ENCODE measurements at regions of chr18 and their contacts with region 1.

Region 1: DNA sequence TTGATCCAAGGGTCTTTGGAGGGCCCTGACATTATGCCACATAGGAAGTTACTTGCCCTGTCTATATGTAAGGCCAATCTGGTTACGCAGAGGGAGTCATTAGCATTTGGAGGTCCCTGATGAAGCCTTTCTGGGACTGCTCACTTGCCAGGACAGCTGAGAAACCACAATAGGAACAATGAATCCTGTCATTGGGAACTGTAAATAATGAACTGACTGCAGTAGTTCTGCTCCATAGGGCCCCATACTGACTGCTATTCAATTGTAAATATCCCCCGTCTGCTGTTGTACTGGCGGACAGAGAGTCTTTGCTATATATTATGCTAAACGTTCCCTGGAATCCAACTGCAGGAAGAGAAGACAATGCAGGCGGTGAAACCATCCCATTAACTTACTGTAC is 149.4 kb upstream of the DCC start:
- DNase-seq: no peak
- H3K4me3 ChIP-seq: no peak overlapping the region
- H3K27ac ChIP-seq: no peak overlapping the region
- H3K4me1 ChIP-seq: no peaks in the 10 kb centered on the region
- H3K27me3 ChIP-seq: no peaks in the 10 kb centered on the region
- CTCF ChIP-seq: no peak

Region 2: DNA sequence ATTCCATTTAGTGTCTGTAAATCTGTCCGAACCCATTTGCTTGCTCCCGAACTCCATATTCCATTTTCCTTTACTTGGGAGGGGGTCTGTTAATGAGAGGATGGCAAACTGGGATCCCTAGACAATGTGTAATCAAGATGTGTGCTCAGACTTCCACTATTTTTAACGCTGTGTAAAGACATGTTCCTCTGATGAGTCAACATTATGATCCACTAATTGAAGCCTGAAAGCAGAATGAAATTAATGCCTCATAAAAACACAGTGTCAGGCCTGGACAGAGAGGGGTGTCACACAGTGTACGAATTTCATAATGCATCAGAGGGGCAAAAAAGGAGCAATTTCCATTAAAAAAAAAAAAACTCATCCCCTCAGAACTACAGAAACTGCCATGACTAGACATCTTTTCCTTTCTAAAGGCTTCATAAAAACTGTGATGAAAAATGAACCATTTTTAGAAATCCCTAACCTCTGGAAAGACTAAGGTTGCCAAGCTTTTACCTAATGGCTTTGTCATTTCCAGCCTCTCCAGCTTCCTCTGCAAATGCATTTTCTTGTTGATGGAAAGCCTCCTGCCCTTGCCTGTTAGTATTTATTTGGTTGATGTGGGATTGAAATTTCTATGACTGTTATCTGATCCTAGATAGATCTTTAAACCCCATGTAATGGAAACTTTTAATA is 59.9 kb before region 1 on chr18:
- intact Hi-C with region 1: loop called (anchors 10 kb)
- DNase-seq: no peak
- H3K4me3 ChIP-seq: no peak overlapping the region
- H3K27ac ChIP-seq: no peak overlapping the region
- H3K4me1 ChIP-seq: no peaks in the 10 kb centered on the region
- H3K27me3 ChIP-seq: no peaks in the 10 kb centered on the region
- CTCF ChIP-seq: no peak

Region 3: GRCh38 chr18:52237551-52237950 is 46.9 kb after region 1 on chr18:
- intact Hi-C with region 1: no loop called
- DNase-seq: no peak
- H3K4me3 ChIP-seq: no peak overlapping the region
- H3K27ac ChIP-seq: no peak overlapping the region
- H3K4me1 ChIP-seq: no peaks in the 10 kb centered on the region
- H3K27me3 ChIP-seq: no peaks in the 10 kb centered on the region
- CTCF ChIP-seq: no peak